ENCODE measurements at regions of chr14 and their contacts with region 1.

Region 1: GRCh38 chr14:55051426-55052268 is at the start of gene MAPK1IP1L:
- DNase-seq: peak; percentile 89 to 94 (median 90)
- ATAC-seq: peak; percentile 93
- H3K4me3 ChIP-seq: peak within 1 kb of the TSS; percentile 97
- H3K27ac ChIP-seq: peak within 1 kb of the TSS; percentile 99
- H3K4me1 ChIP-seq: peaks cover 8 to 14% of the 10 kb centered on the region in 2 experiments; a peak in 3 of 5 replicates
- H3K27me3 ChIP-seq: no peaks in the 10 kb centered on the region
- CTCF ChIP-seq: peak; percentile 93 to 98 (median 98)
- EP300 ChIP-seq: peak; percentile 17; the same call in 1 of the 2 replicates
- POLR2A ChIP-seq: peak; percentile 99
- RAD21 ChIP-seq: peak; percentile 49 to 69
- polyA plus RNA-seq, gene MAPK1IP1L: 54.6 to 96.8 TPM

Region 2: GRCh38 chr14:55026793-55027561 is 24.7 kb before region 1 on chr14 and contains the starts of genes SOCS4 and WDHD1:
- CTCF ChIA-PET with region 1: no interaction called
- POLR2A ChIA-PET with region 1: interaction called, 14 read pairs
- in situ Hi-C with region 1: no loop called
- intact Hi-C with region 1: no loop called
- DNase-seq: peak; percentile 90 to 94 (median 92)
- ATAC-seq: peak; percentile 93
- H3K4me3 ChIP-seq: peak within 1 kb of the TSS; percentile 93
- H3K27ac ChIP-seq: peak within 1 kb of the TSS; percentile 86
- H3K4me1 ChIP-seq: peaks cover 0 to 9% of the 10 kb centered on the region in 2 experiments; a peak in 2 of 5 replicates
- H3K27me3 ChIP-seq: no peaks in the 10 kb centered on the region
- CTCF ChIP-seq: no peak
- EP300 ChIP-seq: no peak
- POLR2A ChIP-seq: peak; percentile 91
- RAD21 ChIP-seq: no peak
- polyA plus RNA-seq, gene SOCS4: 2.6 to 2.9 TPM
- polyA plus RNA-seq, gene WDHD1: 11.7 to 20.4 TPM

Region 3: GRCh38 chr14:55065411-55065810 is 13.8 kb after region 1 on chr14:
- CTCF ChIA-PET with region 1: no interaction called
- POLR2A ChIA-PET with region 1: interaction called, 22 read pairs
- in situ Hi-C with region 1: no loop called
- intact Hi-C with region 1: no loop called
- DNase-seq: no peak
- ATAC-seq: no peak
- H3K4me3 ChIP-seq: no peak overlapping the region
- H3K27ac ChIP-seq: no peak overlapping the region
- H3K4me1 ChIP-seq: peaks cover 0 to 3% of the 10 kb centered on the region in 2 experiments; a peak in 1 of 5 replicates
- H3K27me3 ChIP-seq: no peaks in the 10 kb centered on the region
- CTCF ChIP-seq: no peak
- EP300 ChIP-seq: no peak
- POLR2A ChIP-seq: no peak; the same call in 1 of the 2 replicates
- RAD21 ChIP-seq: no peak

Region 4: DNA sequence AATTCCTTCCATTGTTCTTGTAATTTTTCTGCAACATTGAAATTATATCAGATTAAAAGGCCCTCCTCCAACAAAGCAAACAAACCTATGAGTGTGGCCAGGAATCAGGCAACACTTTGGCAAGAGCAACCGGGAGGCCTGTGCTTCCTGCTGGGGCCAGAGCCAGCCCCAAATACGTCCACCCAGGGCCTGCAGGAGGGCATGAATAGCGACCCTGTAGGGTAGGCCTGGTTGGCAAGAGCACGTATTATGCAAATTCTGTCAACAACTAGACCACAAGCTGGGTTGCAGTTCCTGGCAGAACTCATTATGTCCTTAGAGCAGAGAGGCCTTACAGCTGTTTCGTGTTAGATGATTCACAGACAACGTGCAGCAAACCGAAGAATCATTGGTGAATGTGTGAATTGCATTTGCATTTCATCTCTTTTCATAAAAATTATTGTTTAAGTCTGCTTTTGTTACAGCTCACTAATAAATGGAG is 50.5 kb after region 1 on chr14:
- CTCF ChIA-PET with region 1: no interaction called
- POLR2A ChIA-PET with region 1: no interaction called
- in situ Hi-C with region 1: no loop called
- intact Hi-C with region 1: loop called (anchors 5 kb)
- DNase-seq: peak in 1 of 4 experiments; percentile 46
- ATAC-seq: peak; percentile 30
- H3K4me3 ChIP-seq: no peak overlapping the region; the same call in 1 of the 2 replicates
- H3K27ac ChIP-seq: peak overlapping the region; percentile 99
- H3K4me1 ChIP-seq: peaks cover 4 to 32% of the 10 kb centered on the region in 2 experiments; a peak in 4 of 5 replicates
- H3K27me3 ChIP-seq: no peaks in the 10 kb centered on the region
- CTCF ChIP-seq: no peak
- EP300 ChIP-seq: no peak
- POLR2A ChIP-seq: no peak
- RAD21 ChIP-seq: no peak